ENCODE measurements at regions of chr12 and their contacts with region 1.

Region 1: DNA sequence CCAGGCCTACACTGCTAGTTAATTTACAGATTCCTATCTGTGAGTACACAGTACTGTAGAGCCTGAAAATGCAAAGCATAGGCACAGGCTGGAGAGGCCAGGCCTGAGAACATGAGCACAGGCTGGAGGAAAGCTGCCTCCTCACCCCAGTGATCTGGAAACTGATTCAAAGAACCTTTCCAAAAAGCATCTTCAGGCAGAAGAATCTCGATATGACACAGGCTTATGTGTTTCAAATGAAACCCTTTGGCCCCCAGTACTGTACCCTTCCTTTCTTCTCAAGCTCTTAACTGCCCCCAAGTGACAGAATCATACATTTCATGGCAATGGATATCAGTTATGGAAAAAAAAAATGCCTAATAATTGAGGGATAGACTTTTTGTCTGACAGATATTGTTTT is 122.0 kb downstream of the KCNC2 start:
- DNase-seq: peak in 1 of 2 experiments; percentile 2
- H3K4me3 ChIP-seq: no peak overlapping the region
- H3K4me3 Mint-ChIP-seq: no peak overlapping the region
- H3K27ac Mint-ChIP-seq: no peak overlapping the region
- H3K4me1 ChIP-seq: no peaks in the 10 kb centered on the region
- H3K4me1 Mint-ChIP-seq: no peaks in the 10 kb centered on the region
- H3K27me3 ChIP-seq: no peaks in the 10 kb centered on the region
- H3K27me3 Mint-ChIP-seq: peaks cover 1% of the 10 kb centered on the region
- CTCF ChIP-seq: peak in 1 of 2 experiments; percentile 16

Region 2: DNA sequence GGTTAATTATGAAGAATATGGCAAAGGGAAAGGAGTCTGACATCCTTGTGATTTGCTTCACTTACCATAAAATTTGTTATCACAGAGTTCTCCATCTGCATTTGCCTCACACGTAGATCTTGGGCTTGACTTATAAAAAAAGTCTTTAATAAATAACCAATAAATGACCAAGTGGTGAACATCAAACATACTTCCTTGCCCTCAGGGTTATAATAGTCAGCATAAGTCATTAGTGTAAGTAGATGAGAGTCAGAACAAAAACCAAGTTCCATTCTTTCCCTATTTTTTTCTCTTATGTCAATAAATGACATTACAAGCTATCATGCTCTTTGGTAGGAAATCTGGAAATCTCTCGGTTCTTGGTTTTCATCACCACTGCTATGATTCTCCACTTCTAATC is 1185.4 kb before region 1 on chr12:
- CTCF ChIA-PET with region 1: no interaction called
- POLR2A ChIA-PET with region 1: no interaction called
- intact Hi-C with region 1: no loop called
- DNase-seq: no peak
- H3K4me3 ChIP-seq: no peak overlapping the region
- H3K4me3 Mint-ChIP-seq: no peak overlapping the region
- H3K27ac Mint-ChIP-seq: no peak overlapping the region
- H3K4me1 ChIP-seq: no peaks in the 10 kb centered on the region
- H3K4me1 Mint-ChIP-seq: no peaks in the 10 kb centered on the region
- H3K27me3 ChIP-seq: no peaks in the 10 kb centered on the region
- H3K27me3 Mint-ChIP-seq: no peaks in the 10 kb centered on the region
- CTCF ChIP-seq: no peak

Region 3: DNA sequence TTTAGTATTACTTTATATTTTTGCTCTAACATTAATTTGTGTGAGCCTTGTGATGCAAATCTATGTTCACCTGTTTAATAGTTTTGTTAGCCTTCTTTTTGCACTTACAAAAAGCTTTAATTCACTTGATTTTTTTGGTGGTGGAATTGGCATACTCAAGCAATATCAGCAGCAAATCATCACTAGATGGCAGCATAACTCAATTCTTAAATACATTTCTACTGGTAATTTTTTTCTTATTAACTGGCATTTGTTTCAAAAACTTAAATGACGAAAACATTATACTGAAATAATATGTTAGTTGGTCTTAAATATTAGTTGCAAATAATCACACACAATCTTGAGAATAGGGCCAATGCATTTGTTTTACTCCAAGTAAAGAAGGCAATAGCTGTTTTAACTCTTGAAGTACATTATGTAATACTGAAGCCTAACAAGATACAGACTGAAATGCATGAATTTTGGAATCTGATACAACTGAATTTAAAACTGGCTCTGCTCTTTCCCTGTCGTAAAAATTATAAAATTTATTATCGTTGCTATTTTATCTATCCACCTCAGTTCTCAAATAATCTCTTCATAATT is 398.5 kb before region 1 on chr12:
- CTCF ChIA-PET with region 1: no interaction called
- POLR2A ChIA-PET with region 1: no interaction called
- intact Hi-C with region 1: loop called (anchors 5 kb)
- DNase-seq: no peak
- H3K4me3 ChIP-seq: no peak overlapping the region
- H3K4me3 Mint-ChIP-seq: no peak overlapping the region
- H3K27ac Mint-ChIP-seq: no peak overlapping the region
- H3K4me1 ChIP-seq: no peaks in the 10 kb centered on the region
- H3K4me1 Mint-ChIP-seq: no peaks in the 10 kb centered on the region
- H3K27me3 ChIP-seq: no peaks in the 10 kb centered on the region
- H3K27me3 Mint-ChIP-seq: peaks cover 6% of the 10 kb centered on the region
- CTCF ChIP-seq: peak; percentile 41

Region 4: GRCh38 chr12:74801625-74802024 is 286.0 kb before region 1 on chr12:
- CTCF ChIA-PET with region 1: no interaction called
- POLR2A ChIA-PET with region 1: no interaction called
- intact Hi-C with region 1: loop called (anchors 2 kb)
- DNase-seq: no peak
- H3K4me3 ChIP-seq: no peak overlapping the region
- H3K4me3 Mint-ChIP-seq: no peak overlapping the region
- H3K27ac Mint-ChIP-seq: no peak overlapping the region
- H3K4me1 ChIP-seq: no peaks in the 10 kb centered on the region
- H3K4me1 Mint-ChIP-seq: no peaks in the 10 kb centered on the region
- H3K27me3 ChIP-seq: no peaks in the 10 kb centered on the region
- H3K27me3 Mint-ChIP-seq: no peaks in the 10 kb centered on the region
- CTCF ChIP-seq: no peak

Region 5: DNA sequence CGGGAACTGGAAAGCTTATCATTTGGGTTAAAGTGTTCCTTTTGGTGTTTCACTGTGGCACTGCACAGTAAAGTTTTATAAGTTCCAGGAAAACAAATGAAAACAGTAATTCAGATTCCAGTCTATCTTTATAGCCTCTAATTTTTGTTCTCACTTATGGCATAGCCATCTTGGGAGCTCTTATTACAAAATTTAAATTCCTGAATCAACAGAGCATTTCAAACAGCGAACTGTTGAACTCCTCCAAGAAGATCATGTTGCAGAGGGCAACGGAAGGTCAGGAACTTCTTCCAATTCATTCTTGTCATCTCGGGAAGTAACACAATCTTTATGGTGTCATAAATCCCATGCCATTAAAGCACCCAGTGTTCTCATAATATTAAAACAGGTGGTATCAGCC is 107.1 kb before region 1 on chr12:
- CTCF ChIA-PET with region 1: no interaction called
- POLR2A ChIA-PET with region 1: no interaction called
- intact Hi-C with region 1: no loop called
- DNase-seq: peak in 1 of 2 experiments; percentile 44
- H3K4me3 ChIP-seq: no peak overlapping the region
- H3K4me3 Mint-ChIP-seq: no peak overlapping the region
- H3K27ac Mint-ChIP-seq: no peak overlapping the region
- H3K4me1 ChIP-seq: no peaks in the 10 kb centered on the region; the same call in 1 of the 2 replicates
- H3K4me1 Mint-ChIP-seq: no peaks in the 10 kb centered on the region
- H3K27me3 ChIP-seq: no peaks in the 10 kb centered on the region
- H3K27me3 Mint-ChIP-seq: peaks cover 5% of the 10 kb centered on the region
- CTCF ChIP-seq: no peak

Region 6: GRCh38 chr12:75130825-75131224 is 43.2 kb after region 1 on chr12:
- CTCF ChIA-PET with region 1: no interaction called
- POLR2A ChIA-PET with region 1: no interaction called
- intact Hi-C with region 1: no loop called
- DNase-seq: no peak
- H3K4me3 ChIP-seq: no peak overlapping the region
- H3K4me3 Mint-ChIP-seq: no peak overlapping the region
- H3K27ac Mint-ChIP-seq: no peak overlapping the region
- H3K4me1 ChIP-seq: no peaks in the 10 kb centered on the region
- H3K4me1 Mint-ChIP-seq: no peaks in the 10 kb centered on the region
- H3K27me3 ChIP-seq: no peaks in the 10 kb centered on the region
- H3K27me3 Mint-ChIP-seq: no peaks in the 10 kb centered on the region
- CTCF ChIP-seq: no peak

Region 7: DNA sequence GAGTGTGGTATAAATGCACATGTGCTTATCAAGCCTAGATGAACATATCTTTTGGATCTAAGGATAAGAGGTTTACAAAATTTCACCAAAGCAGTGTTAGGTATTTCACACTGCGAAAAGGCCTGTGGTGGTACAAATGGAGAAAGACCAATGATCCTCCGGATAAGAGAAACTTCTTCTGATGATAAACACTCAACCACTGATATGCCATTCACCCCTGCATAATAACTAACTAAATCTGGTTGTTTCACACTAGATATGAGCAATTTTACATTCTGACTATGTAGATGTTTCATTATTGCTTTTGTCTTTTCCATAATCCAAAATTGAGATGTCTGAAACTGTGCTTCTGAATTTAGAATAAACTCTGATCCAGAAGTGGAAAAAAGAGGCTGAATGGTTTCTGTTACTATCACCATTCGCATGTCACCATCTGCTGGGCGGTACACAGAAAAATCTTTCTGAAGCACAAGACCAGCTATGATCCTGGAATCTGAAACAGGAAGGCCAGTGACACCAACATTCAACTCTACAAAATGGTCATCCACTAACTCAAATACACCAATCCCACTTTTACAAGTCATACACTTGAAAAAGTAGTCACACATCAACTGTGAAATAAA is 1259.3 kb after region 1 on chr12:
- CTCF ChIA-PET with region 1: no interaction called
- POLR2A ChIA-PET with region 1: no interaction called
- intact Hi-C with region 1: no loop called
- DNase-seq: peak; percentile 40 to 45
- H3K4me3 ChIP-seq: peak overlapping the region; percentile 57
- H3K4me3 Mint-ChIP-seq: peak overlapping the region; percentile 82
- H3K27ac Mint-ChIP-seq: no peak overlapping the region
- H3K4me1 ChIP-seq: peaks cover 5% of the 10 kb centered on the region; the same call in 1 of the 2 replicates
- H3K4me1 Mint-ChIP-seq: peaks cover 9% of the 10 kb centered on the region
- H3K27me3 ChIP-seq: no peaks in the 10 kb centered on the region; the same call in 1 of the 2 replicates
- H3K27me3 Mint-ChIP-seq: no peaks in the 10 kb centered on the region
- CTCF ChIP-seq: peak in 1 of 2 experiments; percentile 50

Measured in Caco-2 (cell line).